Left cardiac atrium (tissue), 4 donors: ENCODE measurements at regions of chr2 and their contacts with region 1.

Region 1: DNA sequence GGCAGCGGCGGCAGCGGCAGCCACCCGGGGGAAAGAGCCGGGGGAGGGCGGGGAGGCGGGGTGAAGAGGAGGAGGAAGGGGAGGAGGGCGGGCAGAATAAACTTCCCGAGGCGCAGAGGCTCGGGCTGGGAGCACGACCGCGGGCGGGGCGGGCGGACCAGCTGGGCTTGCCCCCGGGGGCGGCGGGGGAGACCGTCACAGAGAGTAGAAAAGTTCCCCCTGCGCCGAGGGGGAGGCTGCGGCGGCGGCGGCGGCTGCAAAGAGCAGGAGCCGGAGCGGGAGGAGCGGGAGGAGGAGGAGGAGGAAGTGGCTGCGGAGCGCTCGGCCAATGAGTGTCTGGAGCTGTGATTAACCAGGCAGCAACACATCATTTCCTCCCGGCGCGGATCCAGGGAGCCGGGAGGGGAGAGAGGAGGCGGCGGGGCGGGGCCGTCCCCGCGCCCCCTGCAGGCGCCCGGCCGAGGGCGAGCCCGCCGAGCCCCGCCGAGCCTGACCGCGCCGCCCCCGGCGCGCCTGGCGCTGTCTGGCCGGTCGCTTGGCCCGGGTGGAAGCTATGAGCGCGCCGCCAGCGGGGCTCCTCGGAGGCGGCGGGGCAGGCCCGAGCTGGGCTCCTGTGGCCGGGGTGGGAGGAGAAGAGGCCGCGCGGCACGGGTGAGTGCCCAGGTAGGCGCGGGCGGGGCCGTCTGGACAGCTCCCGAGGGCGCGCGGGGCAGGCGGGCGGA is at the start of gene ACVR1:
- DNase-seq: peak; percentile 96
- ATAC-seq: peak; percentile 94 to 96
- total RNA-seq, gene ACVR1: 34.2 to 36.8 TPM

Region 2: GRCh38 chr2:157628477-157629415 is 247.5 kb before region 1 on chr2 and contains the start of gene ACVR1C:
- intact Hi-C with region 1: no loop called
- DNase-seq: peak; percentile 51
- ATAC-seq: peak; percentile 93 to 95
- total RNA-seq, gene ACVR1C: 2.6 to 10.0 TPM

Region 3: DNA sequence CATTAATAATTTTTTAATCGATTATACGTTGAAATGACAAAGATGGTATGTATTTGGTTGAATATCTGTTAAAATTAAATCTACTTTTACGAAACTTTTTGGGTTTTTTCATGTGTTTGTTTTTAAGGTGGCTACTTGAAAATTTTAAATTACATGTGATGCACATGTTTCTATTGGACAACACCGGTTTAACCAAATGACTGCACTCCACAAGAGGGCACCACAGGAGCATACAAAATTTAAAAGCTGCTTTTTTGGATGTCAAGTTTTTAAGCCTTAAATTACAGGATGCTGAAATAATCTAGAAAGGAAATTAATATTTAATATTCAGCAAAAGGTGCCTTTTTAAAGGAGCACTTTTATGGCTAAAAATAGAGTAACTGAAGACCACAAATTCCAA is 98.8 kb before region 1 on chr2:
- intact Hi-C with region 1: loop called in 1 of 2 experiments (anchors 5 kb)
- DNase-seq: peak; percentile 44
- ATAC-seq: peak in 1 of 2 donors; percentile 39

Region 4: GRCh38 chr2:157784169-157784822 is 91.9 kb before region 1 on chr2:
- intact Hi-C with region 1: loop called (anchors 2 to 5 kb)
- DNase-seq: peak; percentile 67
- ATAC-seq: peak; percentile 62 to 70

Region 5: GRCh38 chr2:157838442-157839161 is 37.6 kb before region 1 on chr2:
- intact Hi-C with region 1: loop called in 1 of 2 experiments (anchors 2 kb)
- DNase-seq: peak; percentile 52
- ATAC-seq: peak; percentile 67 to 90